Panc1 (cell line): ENCODE measurements at regions of chr10 and their contacts with region 1.

Region 1: GRCh38 chr10:5434017-5434753 is 21.8 kb downstream of the NET1 start:
- DNase-seq: no peak
- ATAC-seq: no peak
- H3K4me3 ChIP-seq: no peak overlapping the region
- H3K27ac ChIP-seq: no peak overlapping the region
- H3K4me1 ChIP-seq: no peaks in the 10 kb centered on the region
- H3K27me3 ChIP-seq: no peaks in the 10 kb centered on the region
- CTCF ChIP-seq: peak; percentile 65; the same call in 1 of the 2 replicates

Region 2: GRCh38 chr10:4663162-4663904 is 770.9 kb before region 1 on chr10:
- CTCF ChIA-PET with region 1: interaction called, 12 read pairs
- POLR2A ChIA-PET with region 1: no interaction called
- in situ Hi-C with region 1: no loop called
- intact Hi-C with region 1: no loop called
- DNase-seq: peak; percentile 94
- ATAC-seq: peak; percentile 99
- H3K4me3 ChIP-seq: no peak overlapping the region
- H3K27ac ChIP-seq: peak overlapping the region; percentile 97
- H3K4me1 ChIP-seq: peaks cover 12% of the 10 kb centered on the region
- H3K27me3 ChIP-seq: no peaks in the 10 kb centered on the region
- CTCF ChIP-seq: no peak